ENCODE measurements at regions of chr18 and their contacts with region 1.

Region 1: DNA sequence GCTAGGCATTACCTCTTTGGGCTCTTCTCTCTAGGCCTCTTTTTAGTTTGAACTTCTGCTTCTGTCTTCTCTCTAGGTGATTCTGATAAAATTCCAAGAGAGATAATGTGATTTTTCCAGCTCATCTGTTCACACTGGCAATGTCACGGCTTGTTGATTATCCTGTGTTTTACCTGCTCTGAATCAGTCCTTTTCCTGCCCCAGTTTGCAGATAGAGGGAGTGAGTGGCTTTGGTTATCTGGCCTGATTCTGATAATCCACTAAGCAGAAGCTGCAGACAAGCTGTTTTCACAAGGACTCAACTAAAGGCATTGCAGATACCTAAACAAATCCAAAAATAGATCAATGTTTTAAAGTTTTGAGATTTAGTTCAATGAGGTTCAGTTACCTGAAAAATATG is 111.9 kb downstream of the DCC start:
- DNase-seq: no peak
- H3K4me3 ChIP-seq: no peak overlapping the region
- H3K27ac ChIP-seq: no peak overlapping the region
- H3K4me1 ChIP-seq: no peaks in the 10 kb centered on the region
- H3K27me3 ChIP-seq: no peaks in the 10 kb centered on the region
- CTCF ChIP-seq: no peak
- POLR2A ChIP-seq: no peak

Region 2: DNA sequence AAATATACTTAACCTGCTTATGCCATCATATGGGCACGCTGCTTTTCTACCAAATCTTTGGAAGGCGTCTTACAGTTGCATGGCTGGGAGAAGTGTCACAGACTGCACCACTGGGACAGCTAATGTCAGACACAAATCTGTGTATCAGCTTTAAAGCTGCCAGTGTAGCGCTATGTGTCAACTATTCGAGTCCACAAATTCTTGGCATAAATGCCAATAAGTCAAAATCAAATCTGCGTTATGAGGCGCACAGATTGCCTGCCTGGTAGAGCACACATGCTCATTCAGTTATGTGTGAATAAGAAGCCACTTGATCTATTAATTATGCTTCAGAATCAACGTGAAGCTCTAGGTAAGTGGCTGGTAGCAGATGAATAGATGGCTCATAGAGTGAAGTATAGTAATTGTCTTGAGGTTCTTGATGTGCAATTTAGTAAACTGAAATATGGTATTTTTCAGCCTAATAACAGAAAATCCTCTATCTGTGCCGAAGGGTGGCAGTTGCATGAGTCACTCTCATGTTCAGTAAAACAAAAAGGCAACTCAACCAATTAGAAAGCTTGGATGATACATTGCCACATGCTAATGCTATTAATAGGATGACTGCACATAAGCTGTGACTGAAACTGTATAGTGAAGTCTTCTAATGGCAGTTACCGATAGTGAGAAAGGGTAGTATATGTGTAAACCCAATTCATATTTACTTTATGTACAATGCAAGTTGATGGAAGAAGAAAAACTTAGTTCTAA is 59.9 kb before region 1 on chr18:
- intact Hi-C with region 1: no loop called
- DNase-seq: no peak
- H3K4me3 ChIP-seq: no peak overlapping the region
- H3K27ac ChIP-seq: no peak overlapping the region
- H3K4me1 ChIP-seq: no peaks in the 10 kb centered on the region
- H3K27me3 ChIP-seq: no peaks in the 10 kb centered on the region
- CTCF ChIP-seq: no peak
- POLR2A ChIP-seq: no peak

Region 3: GRCh38 chr18:53864770-53865169 is 1412.9 kb after region 1 on chr18:
- intact Hi-C with region 1: loop called (anchors 10 kb)
- DNase-seq: no peak
- H3K4me3 ChIP-seq: no peak overlapping the region
- H3K27ac ChIP-seq: no peak overlapping the region
- H3K4me1 ChIP-seq: no peaks in the 10 kb centered on the region
- H3K27me3 ChIP-seq: no peaks in the 10 kb centered on the region
- CTCF ChIP-seq: no peak
- POLR2A ChIP-seq: no peak